ENCODE measurements at regions of chr1 and their contacts with region 1.

Region 1: DNA sequence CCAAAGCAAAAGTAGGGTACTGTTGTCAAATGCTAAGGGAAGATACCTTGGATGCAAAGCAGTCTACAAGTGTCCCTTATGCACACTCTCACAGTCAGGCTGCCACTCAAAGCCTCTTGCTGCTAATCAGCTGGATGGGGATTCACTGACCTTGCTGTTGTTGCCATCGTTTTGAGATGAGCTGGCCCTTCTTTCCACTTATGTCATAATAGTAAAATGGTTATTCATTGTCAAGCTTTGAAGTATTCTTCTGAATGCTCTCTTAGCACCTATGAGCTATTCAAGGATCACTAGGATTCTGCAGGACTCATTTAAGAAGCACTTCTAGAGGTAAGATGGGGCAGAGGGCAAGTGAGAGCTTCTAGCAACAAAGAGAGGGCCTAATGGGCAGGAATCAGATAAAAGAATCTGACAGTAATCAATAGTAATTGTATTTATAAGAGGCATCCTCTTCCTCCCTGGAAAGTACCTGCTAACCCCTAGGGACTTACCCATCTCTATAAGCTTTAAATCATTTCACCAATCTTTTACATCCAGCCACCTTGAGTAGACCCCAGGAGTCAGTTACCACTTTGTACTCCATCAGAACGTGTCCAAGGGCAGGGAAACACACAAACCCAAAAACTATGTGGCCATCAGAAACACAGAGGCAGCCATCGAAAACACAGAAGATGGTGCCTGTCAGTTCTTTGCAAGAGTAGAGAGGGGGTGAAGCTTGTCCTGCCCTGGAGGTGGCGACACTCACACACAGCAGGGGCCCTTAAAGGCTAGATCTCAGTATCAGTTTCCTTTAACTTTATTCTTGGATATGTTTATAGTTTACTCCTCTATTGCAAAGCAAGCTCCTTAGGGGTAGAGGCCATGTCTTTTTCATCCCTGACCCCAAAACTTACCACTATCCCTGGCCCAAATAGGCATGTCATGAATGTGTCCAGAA is 103.7 kb upstream of the NFIA start:
- DNase-seq: peak; percentile 74

Region 2: GRCh38 chr1:60989749-60990713 is 11.3 kb after region 1 on chr1:
- CTCF ChIA-PET with region 1: interaction called, 16 read pairs
- POLR2A ChIA-PET with region 1: no interaction called
- DNase-seq: no peak

Region 3: GRCh38 chr1:61043010-61043820 is 64.5 kb after region 1 on chr1:
- CTCF ChIA-PET with region 1: interaction called, 19 read pairs
- POLR2A ChIA-PET with region 1: no interaction called
- DNase-seq: peak; percentile 92

Region 4: DNA sequence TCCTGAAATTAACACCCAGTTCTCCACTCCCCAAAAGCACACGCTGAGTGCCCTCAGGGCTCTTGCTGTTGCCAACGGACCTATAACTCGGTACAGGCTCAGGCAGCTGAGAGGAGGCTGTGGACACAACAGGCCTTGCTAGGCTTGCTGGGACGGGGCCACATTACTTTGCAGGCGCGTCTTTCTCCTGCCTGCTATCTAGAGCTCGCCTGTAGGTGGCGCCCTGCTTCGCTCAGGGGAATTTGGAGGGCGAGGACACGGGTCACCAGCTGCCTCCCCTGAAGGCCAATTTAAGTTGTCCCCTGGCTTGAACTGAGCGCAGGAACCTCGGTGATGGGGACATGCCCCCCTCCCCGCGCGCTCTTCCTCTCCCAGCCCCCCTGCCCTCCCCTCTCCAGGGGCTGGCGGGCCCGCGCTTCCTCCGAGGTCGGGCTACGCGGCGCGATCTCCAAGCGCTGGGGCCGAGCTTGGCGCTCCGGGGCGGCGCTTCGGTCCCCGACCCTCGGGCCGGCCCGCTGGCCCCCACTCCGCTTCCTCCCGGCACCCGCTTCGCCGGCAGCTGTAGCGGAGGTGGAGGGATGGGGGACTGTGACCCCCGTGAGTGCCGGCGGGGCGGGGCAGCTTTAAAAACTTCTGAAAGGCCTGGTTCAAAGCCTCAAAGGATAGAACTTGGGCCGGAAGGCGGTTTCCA is 71.3 kb after region 1 on chr1:
- CTCF ChIA-PET with region 1: interaction called, 11 read pairs
- POLR2A ChIA-PET with region 1: no interaction called
- DNase-seq: peak; percentile 96

Region 5: GRCh38 chr1:61270761-61271411 is 292.2 kb after region 1 on chr1:
- CTCF ChIA-PET with region 1: no interaction called
- POLR2A ChIA-PET with region 1: no interaction called
- DNase-seq: peak; percentile 34